GM13976 (cell line): ENCODE measurements at regions of chr7 and their contacts with region 1.

Region 1: DNA sequence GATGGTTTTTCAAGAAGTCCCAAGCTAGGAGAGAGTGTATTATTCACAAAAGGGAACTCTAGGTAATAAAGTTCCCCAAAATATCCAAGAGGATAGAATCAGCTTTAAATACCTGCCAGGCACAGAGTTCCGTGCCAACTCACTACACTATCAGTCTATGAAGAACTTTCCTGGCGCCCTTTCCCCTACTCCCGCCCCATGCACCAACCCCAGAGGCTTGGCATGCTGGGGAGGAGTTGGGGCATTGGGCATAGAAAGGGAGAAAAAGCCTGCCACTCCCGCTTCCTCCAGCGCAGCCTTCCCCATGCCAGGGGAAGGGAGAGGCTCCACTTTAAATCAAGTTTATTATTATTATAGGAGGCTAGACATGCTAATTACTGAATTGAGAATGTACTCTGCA is 54.9 kb downstream of the ZNF800 start:
- DNase-seq: no peak
- CTCF ChIP-seq: no peak

Region 2: GRCh38 chr7:127447326-127447945 is 109.9 kb after region 1 on chr7:
- in situ Hi-C with region 1: loop called (anchors 10 kb)
- DNase-seq: peak; percentile 64
- CTCF ChIP-seq: peak; percentile 91